PC-3 (cell line): ENCODE measurements at regions of chr22 and their contacts with region 1.

Region 1: GRCh38 chr22:28703436-28703835 is 23.8 kb upstream of the TTC28 start:
- DNase-seq: no peak
- ATAC-seq: no peak
- H3K4me3 ChIP-seq: no peak overlapping the region
- H3K27ac ChIP-seq: no peak overlapping the region
- H3K4me1 ChIP-seq: no peaks in the 10 kb centered on the region
- H3K27me3 ChIP-seq: no peaks in the 10 kb centered on the region
- CTCF ChIP-seq: no peak

Region 2: GRCh38 chr22:27588268-27588667 is 1115.2 kb before region 1 on chr22:
- CTCF ChIA-PET with region 1: no interaction called
- POLR2A ChIA-PET with region 1: interaction called, 12 read pairs
- intact Hi-C with region 1: no loop called
- DNase-seq: peak; percentile 55
- ATAC-seq: peak; percentile 22; the same call in 1 of the 2 replicates
- H3K4me3 ChIP-seq: no peak overlapping the region
- H3K27ac ChIP-seq: peak overlapping the region; percentile 43
- H3K4me1 ChIP-seq: peaks cover 24% of the 10 kb centered on the region
- H3K27me3 ChIP-seq: no peaks in the 10 kb centered on the region
- CTCF ChIP-seq: no peak

Region 3: GRCh38 chr22:28741200-28741757 is 37.8 kb after region 1 on chr22:
- CTCF ChIA-PET with region 1: no interaction called
- POLR2A ChIA-PET with region 1: no interaction called
- intact Hi-C with region 1: no loop called
- DNase-seq: no peak
- ATAC-seq: no peak; the same call in 1 of the 2 replicates
- H3K4me3 ChIP-seq: peak overlapping the region; percentile 81
- H3K27ac ChIP-seq: no peak overlapping the region
- H3K4me1 ChIP-seq: peaks cover 7% of the 10 kb centered on the region
- H3K27me3 ChIP-seq: no peaks in the 10 kb centered on the region
- CTCF ChIP-seq: no peak